ENCODE measurements at regions of chr16 and their contacts with region 1.

Region 1: DNA sequence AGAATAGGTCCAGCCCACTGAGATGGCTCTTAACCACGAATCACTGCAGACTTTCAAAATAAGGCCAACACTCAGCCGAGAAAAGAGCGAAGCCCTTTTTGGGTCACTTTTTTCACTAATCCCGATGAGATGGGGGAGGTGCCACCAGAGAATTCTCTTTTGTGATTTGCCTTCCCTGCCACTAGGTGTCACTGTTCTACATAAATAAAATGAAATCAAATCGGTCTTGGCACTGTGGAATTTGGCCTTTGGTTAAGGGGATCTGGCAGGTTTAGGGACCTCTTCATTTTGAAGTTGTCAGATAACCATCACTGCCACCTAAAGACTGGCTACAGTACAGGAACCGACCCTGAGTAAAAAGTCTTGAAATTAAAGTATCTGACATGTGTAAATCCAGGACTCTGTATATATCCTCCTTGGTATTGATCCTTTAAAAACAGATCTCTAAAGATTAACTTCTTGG is 147.0 kb downstream of the HS3ST4 start:
- DNase-seq: no peak

Region 2: DNA sequence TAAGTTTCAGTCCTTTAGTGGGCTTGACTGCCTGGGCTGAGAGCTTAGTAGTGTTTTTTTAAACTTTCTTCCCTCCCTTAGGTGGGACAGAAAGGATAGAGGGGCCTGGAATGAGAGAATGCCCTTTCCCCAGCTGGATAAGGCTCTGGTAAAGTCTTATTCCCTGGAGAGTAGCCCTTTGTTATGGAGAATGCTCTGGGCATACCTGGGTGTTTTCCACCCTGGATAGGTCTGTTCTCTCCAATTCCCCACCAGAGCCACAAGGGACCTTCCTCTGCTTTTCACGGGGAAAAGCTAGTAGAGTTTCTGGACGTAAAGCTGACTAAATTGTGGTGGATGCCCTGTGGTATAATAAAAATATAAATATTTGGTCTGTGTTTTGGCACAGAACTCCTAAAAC is 17.1 kb after region 1 on chr16:
- intact Hi-C with region 1: no loop called
- DNase-seq: no peak

Region 3: DNA sequence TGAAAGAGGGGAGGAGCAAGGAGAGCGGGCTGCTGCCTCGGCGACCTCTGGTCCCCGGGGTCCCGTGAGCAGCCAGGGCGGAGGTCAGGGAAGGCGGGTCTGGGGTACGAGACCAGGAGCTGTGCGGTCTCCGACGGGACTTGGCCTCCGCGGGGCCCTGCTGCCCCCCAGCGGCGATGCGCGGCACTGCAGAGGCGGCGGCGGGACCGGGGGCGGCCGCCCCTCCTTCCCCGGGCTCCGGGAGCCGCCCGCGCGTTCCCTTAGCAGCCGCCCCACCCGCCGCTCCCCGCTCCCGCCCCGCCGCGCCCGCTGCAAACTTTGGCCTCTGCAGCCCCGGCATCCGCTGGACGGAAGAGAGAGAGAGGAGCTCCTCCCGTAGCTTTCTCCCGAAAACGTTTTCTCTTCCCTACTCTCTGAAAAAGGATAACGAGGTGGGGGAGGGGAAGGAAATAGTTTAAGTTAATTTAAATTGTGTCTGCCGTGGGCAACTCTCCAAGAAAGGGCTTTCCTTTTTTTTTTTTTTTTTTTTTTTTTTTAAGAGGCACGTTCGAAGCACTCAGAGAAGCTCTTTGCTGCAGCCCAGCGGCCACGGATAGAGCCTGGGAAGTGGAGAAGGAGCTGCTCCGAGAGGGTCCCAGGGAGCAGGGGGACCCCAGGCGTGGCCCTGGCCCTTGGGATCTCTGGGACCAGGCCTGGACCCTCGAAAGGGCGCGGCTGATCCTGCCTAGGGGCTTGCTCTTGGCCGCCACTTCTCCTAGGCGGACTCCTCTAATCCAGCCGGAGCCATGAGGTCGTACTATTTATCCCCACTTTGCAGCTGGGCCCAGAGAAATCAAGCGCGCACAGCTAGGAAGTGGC is 1271.1 kb after region 1 on chr16:
- intact Hi-C with region 1: loop called in 1 of 2 experiments (anchors 10 kb)
- DNase-seq: peak; percentile 93